ENCODE measurements at regions of chrX and their contacts with region 1.

Region 1: DNA sequence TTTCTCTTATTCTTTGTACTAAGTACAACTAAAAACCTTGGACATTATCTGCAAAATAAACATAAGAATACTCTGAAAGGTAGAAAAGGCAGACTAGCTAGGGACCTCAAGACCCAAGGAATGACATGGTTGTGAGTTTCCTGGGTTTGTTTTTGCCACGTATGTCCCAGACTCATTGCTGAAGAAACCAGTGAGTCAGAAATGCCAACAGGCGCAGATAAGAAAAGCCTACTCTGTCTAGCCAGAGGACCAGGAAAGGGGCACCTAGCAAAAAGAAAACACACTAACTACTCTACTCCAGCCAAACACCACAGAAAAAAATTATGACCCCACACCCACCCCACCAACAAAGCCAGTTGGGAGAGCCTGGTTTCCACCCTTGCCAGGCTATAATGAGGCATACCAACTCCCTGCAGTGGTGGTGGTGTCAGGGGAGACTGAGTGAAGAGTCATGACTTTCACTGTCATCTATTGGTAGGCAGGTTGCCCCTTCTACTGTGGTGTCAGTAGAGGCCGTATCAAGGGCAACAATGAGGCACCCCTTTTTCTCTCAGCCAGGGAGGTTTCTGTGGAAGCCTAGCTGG is 10.9 kb downstream of the MTMR1 start:
- DNase-seq: peak; percentile 79
- H3K4me3 ChIP-seq: no peak overlapping the region
- H3K27ac ChIP-seq: peak overlapping the region; percentile 75
- H3K4me1 ChIP-seq: peaks cover 15% of the 10 kb centered on the region
- H3K27me3 ChIP-seq: no peaks in the 10 kb centered on the region
- CTCF ChIP-seq: no peak
- POLR2A ChIP-seq: no peak

Region 2: GRCh38 chrX:150607201-150607600 is 96.9 kb before region 1 on chrX:
- CTCF ChIA-PET with region 1: no interaction called
- POLR2A ChIA-PET with region 1: no interaction called
- dilution Hi-C with region 1: no loop called
- intact Hi-C with region 1: no loop called
- DNase-seq: no peak
- H3K4me3 ChIP-seq: no peak overlapping the region
- H3K27ac ChIP-seq: no peak overlapping the region
- H3K4me1 ChIP-seq: no peaks in the 10 kb centered on the region
- H3K27me3 ChIP-seq: no peaks in the 10 kb centered on the region
- CTCF ChIP-seq: no peak
- POLR2A ChIP-seq: no peak

Region 3: GRCh38 chrX:150688911-150689481 is 15.1 kb before region 1 on chrX:
- CTCF ChIA-PET with region 1: interaction called, 5 read pairs
- POLR2A ChIA-PET with region 1: no interaction called
- dilution Hi-C with region 1: no loop called
- intact Hi-C with region 1: loop called (anchors 1 kb)
- DNase-seq: peak; percentile 39
- H3K4me3 ChIP-seq: no peak overlapping the region
- H3K27ac ChIP-seq: peak overlapping the region; percentile 69
- H3K4me1 ChIP-seq: peaks cover 18% of the 10 kb centered on the region
- H3K27me3 ChIP-seq: no peaks in the 10 kb centered on the region
- CTCF ChIP-seq: no peak
- POLR2A ChIP-seq: no peak

Region 4: GRCh38 chrX:151151665-151152267 is 447.6 kb after region 1 on chrX:
- CTCF ChIA-PET with region 1: no interaction called
- POLR2A ChIA-PET with region 1: no interaction called
- dilution Hi-C with region 1: no loop called
- intact Hi-C with region 1: no loop called
- DNase-seq: peak; percentile 40
- H3K4me3 ChIP-seq: no peak overlapping the region
- H3K27ac ChIP-seq: no peak overlapping the region
- H3K4me1 ChIP-seq: no peaks in the 10 kb centered on the region
- H3K27me3 ChIP-seq: no peaks in the 10 kb centered on the region
- CTCF ChIP-seq: peak; percentile 46 to 55
- POLR2A ChIP-seq: no peak

Measured in endothelial cell of umbilical vein (primary cell).